Dendritic cell treated with granulocyte-macrophage colony-stimulating factor and Interleukin-4, amounts not matched to agents 40 ng/mL and 50 ng/mL, for 4 days (primary cell): ENCODE measurements at regions of chr4 and their contacts with region 1.

Region 1: GRCh38 chr4:140851032-140851636 is 94.9 kb upstream of the TBC1D9 start:
- H3K4me3 Mint-ChIP-seq: no peak overlapping the region
- H3K27ac Mint-ChIP-seq: no peak overlapping the region
- H3K4me1 Mint-ChIP-seq: peaks cover 5% of the 10 kb centered on the region
- H3K27me3 Mint-ChIP-seq: peaks cover 6% of the 10 kb centered on the region

Region 2: GRCh38 chr4:140359562-140360427 is 491.3 kb before region 1 on chr4:
- intact Hi-C with region 1: loop called (anchors 2 kb)
- H3K4me3 Mint-ChIP-seq: no peak overlapping the region
- H3K27ac Mint-ChIP-seq: no peak overlapping the region
- H3K4me1 Mint-ChIP-seq: no peaks in the 10 kb centered on the region
- H3K27me3 Mint-ChIP-seq: no peaks in the 10 kb centered on the region

Region 3: DNA sequence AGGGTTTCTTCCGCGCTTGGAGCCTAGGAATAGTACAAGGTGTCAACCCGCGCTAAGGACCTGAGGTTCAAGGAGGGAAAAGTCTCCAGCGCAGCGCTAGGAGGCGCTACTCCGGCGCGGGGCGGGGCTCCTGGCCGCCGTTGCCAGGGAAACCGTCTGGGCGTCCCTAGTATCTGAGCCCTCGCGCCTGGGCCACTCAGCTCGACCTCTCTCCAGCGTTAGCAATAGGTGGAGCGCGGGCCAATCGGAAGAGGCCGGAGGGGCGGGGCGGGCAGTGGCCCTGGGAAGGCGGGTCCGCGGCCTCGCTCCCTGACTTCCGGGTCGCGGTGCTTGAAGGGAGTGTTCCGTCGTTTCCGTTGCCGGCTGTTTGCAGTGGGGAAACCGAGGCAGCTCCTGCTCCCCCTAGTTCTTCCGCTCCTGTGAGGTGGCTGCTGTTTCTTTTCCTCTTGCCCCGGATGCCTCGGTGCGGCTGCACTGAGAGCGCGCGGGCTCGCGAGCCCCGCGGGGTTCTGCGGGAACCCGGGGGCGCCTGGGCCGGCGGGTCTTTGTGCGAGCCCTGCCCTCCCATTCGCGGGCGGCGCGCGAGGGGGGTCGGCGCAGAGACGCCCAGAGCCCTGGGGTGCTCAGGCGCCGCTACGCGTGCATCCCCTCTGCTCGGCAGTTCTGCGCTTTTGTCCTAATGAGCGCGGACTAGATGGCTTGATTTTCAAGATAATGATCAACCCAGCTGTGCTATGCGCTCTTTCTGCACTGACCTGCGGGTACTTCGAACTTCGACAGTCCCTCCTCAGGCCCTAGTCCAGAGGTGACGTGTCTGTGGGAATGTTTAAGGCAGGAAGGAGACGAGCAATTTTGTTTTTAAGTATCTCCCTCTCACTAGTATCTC is 327.0 kb before region 1 on chr4 and contains the start of gene ELMOD2:
- intact Hi-C with region 1: loop called (anchors 2 kb)
- H3K4me3 Mint-ChIP-seq: peak within 1 kb of the TSS; percentile 92
- H3K27ac Mint-ChIP-seq: peak within 1 kb of the TSS; percentile 91
- H3K4me1 Mint-ChIP-seq: peaks cover 6% of the 10 kb centered on the region
- H3K27me3 Mint-ChIP-seq: no peaks in the 10 kb centered on the region

Region 4: DNA sequence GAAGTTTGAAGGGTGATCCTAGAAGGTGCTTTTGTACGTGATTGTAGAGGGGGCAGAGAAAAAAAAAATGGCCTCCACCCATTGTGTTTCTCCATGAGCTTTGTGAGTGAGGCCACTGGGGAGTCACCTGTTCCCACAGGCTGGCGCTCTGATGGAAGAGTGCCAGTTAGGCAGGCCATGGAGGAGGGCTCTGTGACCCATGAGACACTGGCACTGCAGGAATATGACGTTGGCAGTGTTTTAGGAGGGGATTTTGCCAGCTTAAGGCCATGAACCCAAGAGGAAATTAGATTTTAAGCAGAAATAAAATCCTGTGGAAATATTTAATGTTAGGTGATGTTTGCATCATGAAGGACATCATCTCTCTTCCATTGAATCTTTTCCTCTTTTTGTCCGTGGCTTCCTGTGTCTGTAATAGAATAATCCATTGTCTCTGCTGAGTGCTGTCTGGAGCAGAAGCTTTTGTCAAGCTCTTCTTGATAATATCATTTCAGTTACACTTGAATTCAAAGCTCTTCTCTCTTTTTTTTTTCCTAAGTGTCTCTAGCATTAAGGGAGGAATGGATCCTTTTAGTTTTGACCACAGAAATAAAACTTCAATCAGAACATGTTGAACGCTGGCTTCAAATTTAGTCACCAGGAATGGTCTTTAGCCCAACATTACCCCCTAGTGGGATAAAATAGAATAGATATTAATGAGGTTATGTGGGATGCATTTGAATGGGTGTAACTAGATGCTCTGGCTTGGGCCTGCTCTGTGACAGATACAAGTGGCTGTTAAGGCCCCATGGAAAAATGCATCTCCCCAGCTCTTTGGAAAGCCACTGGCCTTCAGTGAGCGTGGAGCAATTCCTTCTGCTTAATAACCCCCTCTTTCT is 241.3 kb before region 1 on chr4:
- intact Hi-C with region 1: loop called (anchors 5 kb)
- H3K4me3 Mint-ChIP-seq: no peak overlapping the region
- H3K27ac Mint-ChIP-seq: no peak overlapping the region
- H3K4me1 Mint-ChIP-seq: peaks cover 6% of the 10 kb centered on the region
- H3K27me3 Mint-ChIP-seq: peaks cover 4% of the 10 kb centered on the region

Region 5: GRCh38 chr4:140637836-140638235 is 213.3 kb before region 1 on chr4:
- intact Hi-C with region 1: loop called (anchors 5 kb)
- H3K4me3 Mint-ChIP-seq: no peak overlapping the region
- H3K27ac Mint-ChIP-seq: no peak overlapping the region
- H3K4me1 Mint-ChIP-seq: no peaks in the 10 kb centered on the region
- H3K27me3 Mint-ChIP-seq: peaks cover 4% of the 10 kb centered on the region

Region 6: DNA sequence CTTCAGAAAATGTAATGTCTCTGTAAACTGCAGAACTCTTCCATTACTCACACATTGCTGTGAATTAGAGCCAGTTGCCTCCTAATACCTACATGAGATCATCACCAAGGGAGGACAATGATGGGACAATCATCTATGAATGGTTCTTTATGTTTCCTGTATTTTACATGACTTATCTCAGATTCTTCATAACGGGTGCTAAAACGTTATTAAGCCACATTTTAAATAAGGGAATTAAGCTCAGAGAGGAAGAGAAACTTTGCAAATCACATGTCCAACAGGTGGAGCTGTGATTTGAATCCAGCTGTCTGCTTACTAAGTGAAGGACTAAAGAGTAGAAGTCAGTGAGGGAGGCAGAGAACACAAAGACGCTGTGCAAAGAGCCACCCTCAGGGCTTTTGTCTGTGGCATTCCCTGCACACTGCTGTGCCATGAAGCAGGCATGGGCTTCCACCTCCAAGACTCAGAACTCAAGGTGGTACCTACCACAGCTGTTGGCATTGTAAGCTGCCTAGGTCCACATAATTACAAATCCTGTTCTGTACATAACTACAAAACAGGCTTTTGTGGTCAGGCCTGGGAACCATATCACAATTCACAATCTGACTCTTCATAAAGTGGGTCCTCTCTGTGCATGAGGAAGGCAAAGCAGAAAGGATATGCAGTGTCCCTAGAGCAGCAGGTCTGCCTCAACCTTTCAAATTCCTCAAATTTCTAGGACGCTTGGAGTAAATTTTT is 107.8 kb before region 1 on chr4:
- intact Hi-C with region 1: loop called (anchors 5 kb)
- H3K4me3 Mint-ChIP-seq: no peak overlapping the region
- H3K27ac Mint-ChIP-seq: peak overlapping the region; percentile 72
- H3K4me1 Mint-ChIP-seq: peaks cover 34% of the 10 kb centered on the region
- H3K27me3 Mint-ChIP-seq: peaks cover 3% of the 10 kb centered on the region

Region 7: DNA sequence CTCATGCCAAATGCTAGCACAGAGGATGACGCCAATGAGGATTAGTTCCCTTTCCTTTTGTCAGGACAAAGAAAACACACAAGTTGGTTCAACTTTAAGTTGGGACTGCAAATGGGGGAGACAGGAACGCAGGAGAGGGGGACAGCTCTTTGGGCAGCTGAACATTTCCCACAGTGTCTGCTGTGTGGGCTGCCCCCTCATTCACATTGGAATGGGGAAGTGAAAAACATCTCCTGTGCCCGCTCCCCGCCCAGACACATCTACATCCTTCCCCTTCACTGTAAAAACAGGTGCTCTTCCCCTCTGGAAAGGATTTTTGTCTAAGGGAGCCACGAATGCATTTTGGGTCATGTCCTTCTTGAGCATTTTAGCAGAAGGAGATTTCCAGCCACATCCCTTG is 50.5 kb before region 1 on chr4:
- intact Hi-C with region 1: loop called (anchors 5 kb)
- H3K4me3 Mint-ChIP-seq: no peak overlapping the region
- H3K27ac Mint-ChIP-seq: no peak overlapping the region
- H3K4me1 Mint-ChIP-seq: peaks cover 59% of the 10 kb centered on the region
- H3K27me3 Mint-ChIP-seq: no peaks in the 10 kb centered on the region

Region 8: GRCh38 chr4:141375855-141376254 is 524.7 kb after region 1 on chr4:
- intact Hi-C with region 1: no loop called
- H3K4me3 Mint-ChIP-seq: no peak overlapping the region
- H3K27ac Mint-ChIP-seq: no peak overlapping the region
- H3K4me1 Mint-ChIP-seq: no peaks in the 10 kb centered on the region
- H3K27me3 Mint-ChIP-seq: peaks cover 1% of the 10 kb centered on the region